ENCODE measurements at regions of chr1 and their contacts with region 1.

Region 1: DNA sequence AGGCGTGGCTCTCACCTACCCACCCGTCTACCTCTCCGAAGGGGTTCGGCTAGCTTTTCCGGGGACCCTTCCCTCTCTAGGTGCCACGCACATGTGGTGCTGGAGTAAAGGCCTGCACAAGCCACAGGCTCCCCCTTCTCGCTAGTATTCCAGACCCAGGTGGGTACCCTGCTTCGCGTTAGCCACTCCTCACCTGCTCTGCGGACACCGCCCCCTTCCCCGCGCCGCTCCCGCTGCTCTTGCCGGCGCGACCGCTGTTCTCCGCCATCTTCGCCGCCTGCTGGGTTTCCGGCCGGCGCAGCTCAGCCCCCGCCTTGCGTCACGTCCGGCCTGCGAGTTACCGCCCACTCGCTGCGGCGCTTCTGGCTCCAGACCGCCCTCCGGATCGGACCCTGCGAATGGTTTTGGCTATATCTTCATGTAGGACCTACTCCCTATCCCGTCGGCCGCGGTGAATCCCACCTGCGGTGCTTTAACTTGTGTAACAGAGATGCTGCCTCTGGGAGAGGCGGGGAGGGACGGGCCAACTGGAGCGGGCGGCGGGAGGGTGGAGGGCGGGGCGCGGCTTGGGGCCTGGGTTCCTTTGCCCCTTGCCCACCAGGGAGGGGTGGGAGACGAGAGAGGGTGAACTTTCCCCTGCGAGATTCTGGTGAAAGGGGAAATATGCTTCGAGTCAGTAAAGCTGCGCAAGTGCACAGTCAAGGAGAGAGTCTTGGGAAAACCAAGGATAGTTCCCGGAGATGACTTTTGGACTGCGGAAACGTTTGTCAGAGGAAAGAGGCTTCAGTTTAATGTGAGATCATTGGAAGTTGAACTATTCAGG is at the starts of genes NIT1 and PFDN2:
- DNase-seq: peak; percentile 90
- ATAC-seq: peak; percentile 80
- H3K4me3 Mint-ChIP-seq: peak within 1 kb of the TSS; percentile 94
- H3K27ac Mint-ChIP-seq: peak within 1 kb of the TSS; percentile 89
- H3K4me1 Mint-ChIP-seq: peaks cover 45% of the 10 kb centered on the region
- H3K27me3 Mint-ChIP-seq: no peaks in the 10 kb centered on the region
- total RNA-seq, gene NIT1: 44.7 to 49.3 TPM
- total RNA-seq, gene PFDN2: 54.1 to 62.3 TPM

Region 2: DNA sequence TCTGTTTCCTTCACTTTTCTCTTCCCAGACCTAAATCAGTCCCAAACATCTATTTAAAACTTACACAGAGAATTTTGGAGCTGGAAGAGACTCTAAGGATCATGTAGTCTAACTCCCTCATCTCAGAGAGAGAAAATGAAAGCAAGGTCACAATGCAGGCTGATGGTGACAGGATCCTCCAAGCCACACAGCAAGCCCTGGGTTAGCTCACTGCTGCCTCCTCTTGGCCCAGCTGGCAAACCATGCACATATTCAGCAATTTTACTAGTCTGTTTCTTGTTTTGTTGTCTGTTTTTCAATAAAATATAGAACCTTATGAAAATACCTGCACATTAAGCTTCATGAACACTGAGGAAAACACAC is 349.7 kb before region 1 on chr1:
- POLR2A ChIA-PET with region 1: no interaction called
- DNase-seq: peak; percentile 82
- ATAC-seq: peak; percentile 92
- H3K4me3 Mint-ChIP-seq: peak overlapping the region; percentile 83
- H3K27ac Mint-ChIP-seq: peak overlapping the region; percentile 97
- H3K4me1 Mint-ChIP-seq: peaks cover 38% of the 10 kb centered on the region
- H3K27me3 Mint-ChIP-seq: no peaks in the 10 kb centered on the region

Region 3: GRCh38 chr1:161085252-161085651 is 32.7 kb before region 1 on chr1:
- POLR2A ChIA-PET with region 1: no interaction called
- DNase-seq: no peak
- ATAC-seq: no peak
- H3K4me3 Mint-ChIP-seq: no peak overlapping the region
- H3K27ac Mint-ChIP-seq: no peak overlapping the region
- H3K4me1 Mint-ChIP-seq: peaks cover 8% of the 10 kb centered on the region
- H3K27me3 Mint-ChIP-seq: no peaks in the 10 kb centered on the region

Region 4: DNA sequence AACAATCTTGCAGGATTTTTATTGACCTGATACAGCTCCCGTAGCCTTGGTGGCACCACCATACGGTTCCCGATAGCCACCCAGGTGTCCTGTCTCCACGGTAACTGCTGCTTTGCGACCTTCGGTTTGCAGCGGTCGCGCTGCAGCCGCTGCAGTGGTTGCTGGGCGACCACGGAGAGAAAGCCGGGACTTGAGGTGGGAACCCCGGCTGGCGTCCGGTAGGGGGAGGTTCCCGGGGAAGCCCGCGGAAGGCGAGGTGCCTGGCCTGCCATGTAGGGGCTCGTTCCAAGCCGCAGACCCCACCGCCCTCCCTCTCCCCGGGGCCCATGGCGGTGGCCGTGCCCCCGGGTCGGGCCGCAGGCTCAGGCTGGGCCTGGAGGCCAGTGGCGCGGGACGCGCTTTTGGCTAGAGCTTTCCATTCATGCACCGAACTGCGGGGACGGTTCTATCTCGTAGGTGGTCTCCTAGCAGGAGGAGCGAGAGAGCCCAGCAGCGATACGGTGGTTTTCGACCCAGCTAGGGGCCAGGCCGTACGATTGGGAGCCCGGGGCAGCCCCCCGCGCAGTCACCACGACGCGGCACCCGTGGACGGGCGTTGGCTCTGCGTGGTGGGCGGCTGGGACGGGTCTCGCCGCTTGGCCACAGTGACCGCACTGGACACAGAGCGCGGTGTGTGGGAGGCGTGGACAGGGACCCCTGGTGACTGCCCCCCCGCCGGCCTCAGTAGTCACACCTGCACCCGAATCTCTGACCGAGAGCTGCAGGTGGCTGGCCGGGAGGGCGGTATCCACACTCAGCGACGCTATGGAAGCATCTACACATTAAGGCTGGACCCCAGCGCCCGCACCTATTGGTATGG is 19.5 kb before region 1 on chr1 and contains the start of gene KLHDC9:
- POLR2A ChIA-PET with region 1: interaction called, 14 read pairs
- DNase-seq: peak; percentile 82
- ATAC-seq: peak; percentile 84
- H3K4me3 Mint-ChIP-seq: peak within 1 kb of the TSS; percentile 94
- H3K27ac Mint-ChIP-seq: peak within 1 kb of the TSS; percentile 90
- H3K4me1 Mint-ChIP-seq: peaks cover 21% of the 10 kb centered on the region
- H3K27me3 Mint-ChIP-seq: no peaks in the 10 kb centered on the region
- total RNA-seq, gene KLHDC9: 1.2 TPM

Region 5: DNA sequence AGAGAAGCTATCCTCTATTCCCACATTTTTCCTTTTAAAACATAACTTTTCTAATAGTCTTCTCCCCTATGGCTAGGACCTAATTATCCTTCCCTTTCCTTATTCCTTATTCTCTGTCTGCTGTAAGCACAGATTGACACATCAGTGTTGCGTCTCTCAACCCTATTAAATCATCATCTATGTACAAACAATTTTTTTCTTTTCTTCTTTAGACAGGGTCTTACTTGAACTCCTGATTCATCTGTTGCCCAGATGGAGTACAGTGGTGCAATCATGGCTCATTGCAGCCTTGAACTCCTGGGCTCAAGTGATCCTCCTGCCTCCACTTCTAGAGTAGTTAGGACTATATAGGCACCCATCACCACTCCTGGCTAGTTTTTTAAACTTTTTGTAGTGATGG is 11.5 kb before region 1 on chr1:
- POLR2A ChIA-PET with region 1: interaction called, 11 read pairs
- DNase-seq: no peak
- ATAC-seq: no peak
- H3K4me3 Mint-ChIP-seq: no peak overlapping the region
- H3K27ac Mint-ChIP-seq: no peak overlapping the region
- H3K4me1 Mint-ChIP-seq: peaks cover 7% of the 10 kb centered on the region
- H3K27me3 Mint-ChIP-seq: no peaks in the 10 kb centered on the region

Region 6: DNA sequence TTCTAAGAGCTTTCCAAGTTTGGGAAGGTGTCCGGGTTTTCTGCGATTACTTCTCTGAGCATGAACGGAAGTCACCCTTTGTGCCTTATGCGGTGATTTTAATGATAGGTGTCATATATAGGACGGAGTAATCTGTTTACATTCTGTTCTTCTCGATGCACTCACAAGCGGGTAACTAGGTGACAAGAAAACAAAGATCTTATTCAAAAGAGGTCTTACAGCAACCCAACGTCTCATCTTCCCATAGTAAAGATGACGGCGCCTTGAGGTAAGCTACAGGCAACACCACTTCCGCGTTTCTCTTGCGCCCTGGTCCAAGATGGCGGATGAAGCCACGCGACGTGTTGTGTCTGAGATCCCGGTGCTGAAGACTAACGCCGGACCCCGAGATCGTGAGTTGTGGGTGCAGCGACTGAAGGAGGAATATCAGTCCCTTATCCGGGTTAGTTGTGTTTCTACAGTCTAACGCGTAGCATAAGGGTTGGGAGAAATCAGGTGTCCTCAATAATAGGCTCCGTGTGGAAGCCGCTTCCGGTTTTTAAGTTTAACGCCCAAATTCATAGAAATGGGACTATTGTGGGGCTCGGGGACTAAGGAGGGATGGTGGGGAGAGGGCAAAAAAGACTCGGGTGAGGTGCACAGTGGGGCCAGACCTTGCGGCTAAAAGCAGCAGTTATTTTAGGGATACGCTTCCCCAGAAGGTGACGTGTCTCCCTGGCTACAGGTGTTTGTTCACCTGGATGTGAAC is 35.9 kb after region 1 on chr1 and contains the start of gene UFC1:
- POLR2A ChIA-PET with region 1: interaction called, 11 read pairs
- DNase-seq: peak; percentile 80
- ATAC-seq: peak; percentile 95
- H3K4me3 Mint-ChIP-seq: peak within 1 kb of the TSS; percentile 99
- H3K27ac Mint-ChIP-seq: peak within 1 kb of the TSS; percentile 100
- H3K4me1 Mint-ChIP-seq: peaks cover 20% of the 10 kb centered on the region
- H3K27me3 Mint-ChIP-seq: no peaks in the 10 kb centered on the region
- total RNA-seq, gene UFC1: 95.9 to 98.1 TPM

Region 7: DNA sequence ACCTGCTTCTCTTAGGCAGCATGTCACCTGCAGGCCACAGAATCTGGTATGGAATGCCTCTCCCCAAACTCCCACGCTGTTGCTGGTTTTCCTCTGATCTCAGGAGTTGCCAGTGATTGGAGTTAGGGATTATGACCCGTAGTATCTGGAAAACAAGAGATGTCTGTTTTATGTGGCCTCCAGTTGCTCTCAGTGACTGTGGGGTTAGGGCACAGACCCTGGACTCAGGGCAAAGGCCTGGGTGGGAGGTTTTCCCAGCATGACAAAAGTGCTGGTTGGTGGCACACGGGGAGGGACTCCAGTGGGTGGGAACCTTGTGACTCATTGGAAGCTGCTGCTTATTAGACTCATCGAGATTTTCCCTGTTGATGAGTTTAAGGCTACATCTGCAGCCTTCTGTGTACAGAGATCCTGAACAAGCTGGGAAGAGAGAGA is 120.1 kb after region 1 on chr1 and contains the start of gene NR1I3:
- POLR2A ChIA-PET with region 1: no interaction called
- DNase-seq: no peak
- ATAC-seq: no peak
- H3K4me3 Mint-ChIP-seq: no peak within 1 kb of the TSS
- H3K27ac Mint-ChIP-seq: no peak within 1 kb of the TSS
- H3K4me1 Mint-ChIP-seq: no peaks in the 10 kb centered on the region
- H3K27me3 Mint-ChIP-seq: peaks cover 9% of the 10 kb centered on the region
- total RNA-seq, gene NR1I3: not detected

Region 8: GRCh38 chr1:161274874-161275273 is 156.9 kb after region 1 on chr1:
- POLR2A ChIA-PET with region 1: no interaction called
- DNase-seq: no peak
- ATAC-seq: no peak
- H3K4me3 Mint-ChIP-seq: no peak overlapping the region
- H3K27ac Mint-ChIP-seq: no peak overlapping the region
- H3K4me1 Mint-ChIP-seq: no peaks in the 10 kb centered on the region
- H3K27me3 Mint-ChIP-seq: peaks cover 28% of the 10 kb centered on the region

Measured in activated naive CD8-positive, alpha-beta T cell treated with anti-CD3 and anti-CD28 coated beads, Interleukin-2, amount 10 ng/mL, durations not matched to agents 7 days and 5 days (primary cell).